Mammary epithelial cell (primary cell): ENCODE measurements at regions of chr18 and their contacts with region 1.

Region 1: DNA sequence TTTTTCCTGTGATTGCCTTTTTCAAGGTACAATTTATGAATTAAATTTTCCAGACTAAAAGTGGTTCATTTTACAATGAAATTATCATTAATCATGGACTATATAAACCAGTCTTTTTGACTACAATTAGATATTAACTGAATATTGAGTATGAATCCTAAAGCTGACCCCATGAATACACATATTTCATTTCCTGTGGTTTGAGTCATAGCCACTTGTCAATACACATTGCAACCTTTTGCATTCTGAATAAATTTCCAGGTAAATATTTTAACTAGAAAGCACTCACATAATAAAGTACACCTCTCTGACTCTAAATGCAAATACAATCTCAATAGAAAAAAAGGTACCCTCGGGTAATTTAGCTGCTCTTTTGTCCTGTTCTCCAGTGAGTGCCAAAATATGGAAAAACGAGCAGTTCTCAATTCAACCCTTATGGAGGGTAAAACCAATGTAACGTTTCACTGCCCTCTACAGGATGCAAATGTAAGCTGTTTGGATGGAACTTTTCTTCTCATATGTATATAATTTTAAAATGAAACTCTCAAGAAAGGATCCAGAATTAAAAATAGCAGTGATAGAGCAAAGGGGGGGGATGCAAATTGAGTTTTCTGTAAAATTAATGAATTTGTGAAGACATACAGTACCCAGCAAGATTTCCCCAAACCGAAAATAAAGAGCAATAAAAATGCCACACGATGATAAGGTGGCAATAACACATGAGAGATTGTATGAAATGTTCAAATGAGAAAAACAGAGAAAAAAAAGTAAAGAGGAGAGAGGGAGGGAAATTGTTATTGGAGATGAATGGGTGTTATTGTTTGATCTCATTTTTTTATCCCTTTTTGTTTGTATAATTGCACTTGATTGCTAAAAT is 1795.7 kb upstream of the PIK3C3 start:
- DNase-seq: peak; percentile 34
- H3K4me3 ChIP-seq: no peak overlapping the region
- H3K27ac ChIP-seq: no peak overlapping the region
- H3K4me1 ChIP-seq: no peaks in the 10 kb centered on the region
- H3K27me3 ChIP-seq: no peaks in the 10 kb centered on the region
- CTCF ChIP-seq: peak; percentile 75

Region 2: DNA sequence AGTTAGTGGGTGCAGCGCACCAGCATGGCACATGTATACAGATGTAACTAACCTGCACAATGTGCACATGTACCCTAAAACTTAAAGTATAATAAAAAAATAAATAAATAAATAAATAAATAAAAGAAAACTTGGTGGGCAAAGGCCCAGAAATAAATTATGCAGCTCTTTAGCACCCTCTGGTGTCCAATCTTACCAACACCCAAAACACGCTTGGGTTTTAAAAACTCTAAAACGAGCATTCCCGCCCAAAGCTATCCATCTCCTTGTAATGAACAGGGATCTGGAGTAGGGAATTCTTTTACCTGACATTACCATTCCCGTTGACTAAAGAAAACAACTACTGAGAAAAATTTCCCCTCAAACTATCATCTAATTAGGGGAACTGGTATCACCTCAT is 587.9 kb before region 1 on chr18:
- CTCF ChIA-PET with region 1: no interaction called
- dilution Hi-C with region 1: no loop called
- in situ Hi-C with region 1: no loop called
- intact Hi-C with region 1: loop called (anchors 5 kb)
- DNase-seq: no peak
- H3K4me3 ChIP-seq: no peak overlapping the region
- H3K27ac ChIP-seq: no peak overlapping the region
- H3K4me1 ChIP-seq: no peaks in the 10 kb centered on the region
- H3K27me3 ChIP-seq: no peaks in the 10 kb centered on the region
- CTCF ChIP-seq: peak; percentile 12 to 47

Region 3: GRCh38 chr18:39681061-39681460 is 478.3 kb before region 1 on chr18:
- CTCF ChIA-PET with region 1: no interaction called
- dilution Hi-C with region 1: no loop called
- in situ Hi-C with region 1: no loop called
- intact Hi-C with region 1: loop called (anchors 5 kb)
- DNase-seq: no peak
- H3K4me3 ChIP-seq: no peak overlapping the region
- H3K27ac ChIP-seq: no peak overlapping the region
- H3K4me1 ChIP-seq: no peaks in the 10 kb centered on the region
- H3K27me3 ChIP-seq: no peaks in the 10 kb centered on the region
- CTCF ChIP-seq: no peak